ENCODE measurements at regions of chr5 and their contacts with region 1.

Region 1: GRCh38 chr5:163408311-163408923 is 29.0 kb upstream of the CCNG1 start:
- DNase-seq: peak; percentile 63
- H3K4me3 ChIP-seq: no peak overlapping the region
- H3K27ac ChIP-seq: no peak overlapping the region
- H3K4me1 ChIP-seq: no peaks in the 10 kb centered on the region
- H3K27me3 ChIP-seq: no peaks in the 10 kb centered on the region
- CTCF ChIP-seq: peak; percentile 76 to 83
- POLR2A ChIP-seq: no peak

Region 2: GRCh38 chr5:161544350-161544765 is 1864.1 kb before region 1 on chr5:
- CTCF ChIA-PET with region 1: interaction called, 49 read pairs
- POLR2A ChIA-PET with region 1: no interaction called
- dilution Hi-C with region 1: no loop called
- intact Hi-C with region 1: loop called (anchors 1 kb)
- DNase-seq: peak; percentile 12
- H3K4me3 ChIP-seq: no peak overlapping the region
- H3K27ac ChIP-seq: no peak overlapping the region
- H3K4me1 ChIP-seq: no peaks in the 10 kb centered on the region
- H3K27me3 ChIP-seq: peaks cover 9 to 28% of the 10 kb centered on the region in 2 experiments
- CTCF ChIP-seq: peak; percentile 66 to 72
- POLR2A ChIP-seq: no peak

Region 3: GRCh38 chr5:162543437-162543836 is 865.0 kb before region 1 on chr5:
- CTCF ChIA-PET with region 1: no interaction called
- POLR2A ChIA-PET with region 1: no interaction called
- dilution Hi-C with region 1: no loop called
- intact Hi-C with region 1: no loop called
- DNase-seq: no peak
- H3K4me3 ChIP-seq: no peak overlapping the region
- H3K27ac ChIP-seq: no peak overlapping the region
- H3K4me1 ChIP-seq: no peaks in the 10 kb centered on the region
- H3K27me3 ChIP-seq: no peaks in the 10 kb centered on the region
- CTCF ChIP-seq: no peak
- POLR2A ChIP-seq: no peak

Region 4: DNA sequence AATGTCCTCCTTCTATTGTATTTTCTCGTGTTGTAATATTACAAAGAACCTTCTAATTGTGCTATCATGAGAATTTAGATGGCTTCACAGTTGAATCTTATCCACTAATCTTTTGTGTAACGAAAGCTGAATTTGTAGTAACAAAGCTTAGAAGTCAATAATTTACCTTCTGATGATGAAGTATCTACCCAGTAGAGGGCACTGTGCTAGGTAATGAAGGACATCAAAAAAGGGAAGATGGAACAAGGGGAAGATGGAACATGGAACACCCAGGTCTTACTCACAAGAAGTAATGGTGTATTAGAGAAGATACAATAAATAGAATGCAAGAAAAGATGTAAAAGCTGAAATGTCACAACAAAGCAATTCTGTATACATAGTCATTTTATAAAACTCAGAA is 102.0 kb before region 1 on chr5:
- CTCF ChIA-PET with region 1: interaction called, 45 read pairs
- POLR2A ChIA-PET with region 1: no interaction called
- dilution Hi-C with region 1: no loop called
- intact Hi-C with region 1: loop called (anchors 1 kb)
- DNase-seq: peak; percentile 1
- H3K4me3 ChIP-seq: no peak overlapping the region
- H3K27ac ChIP-seq: no peak overlapping the region
- H3K4me1 ChIP-seq: no peaks in the 10 kb centered on the region
- H3K27me3 ChIP-seq: no peaks in the 10 kb centered on the region
- CTCF ChIP-seq: peak in 1 of 2 donors; percentile 4
- POLR2A ChIP-seq: no peak

Region 5: DNA sequence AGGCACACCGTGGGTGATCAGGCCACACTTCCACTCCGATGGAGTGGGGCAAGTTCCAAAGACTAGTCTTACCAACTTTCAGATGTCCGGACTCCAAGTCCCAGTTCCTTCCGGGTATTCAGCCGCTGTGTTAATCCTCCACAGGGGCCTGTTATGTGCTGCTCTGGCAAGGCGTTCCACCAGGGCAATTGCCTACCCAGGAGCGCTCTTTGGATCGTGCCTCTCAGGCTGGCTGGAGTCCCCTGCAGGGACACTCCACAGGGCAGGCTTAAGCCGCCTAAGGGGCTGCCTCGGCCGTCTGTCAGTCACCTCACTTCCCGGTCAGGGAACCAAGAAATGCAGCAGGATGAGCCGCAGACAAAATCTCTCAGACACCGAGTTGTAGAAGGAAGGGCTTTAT is 89.7 kb before region 1 on chr5:
- CTCF ChIA-PET with region 1: no interaction called
- POLR2A ChIA-PET with region 1: no interaction called
- dilution Hi-C with region 1: no loop called
- intact Hi-C with region 1: no loop called
- DNase-seq: no peak
- H3K4me3 ChIP-seq: no peak overlapping the region
- H3K27ac ChIP-seq: no peak overlapping the region
- H3K4me1 ChIP-seq: no peaks in the 10 kb centered on the region
- H3K27me3 ChIP-seq: no peaks in the 10 kb centered on the region
- CTCF ChIP-seq: no peak
- POLR2A ChIP-seq: no peak

Region 6: GRCh38 chr5:163347671-163348070 is 60.7 kb before region 1 on chr5:
- CTCF ChIA-PET with region 1: interaction called, 34 read pairs
- POLR2A ChIA-PET with region 1: no interaction called
- dilution Hi-C with region 1: no loop called
- intact Hi-C with region 1: loop called (anchors 5 kb)
- DNase-seq: peak; percentile 57
- H3K4me3 ChIP-seq: no peak overlapping the region
- H3K27ac ChIP-seq: no peak overlapping the region
- H3K4me1 ChIP-seq: no peaks in the 10 kb centered on the region
- H3K27me3 ChIP-seq: no peaks in the 10 kb centered on the region
- CTCF ChIP-seq: peak; percentile 60 to 66
- POLR2A ChIP-seq: no peak

Region 7: DNA sequence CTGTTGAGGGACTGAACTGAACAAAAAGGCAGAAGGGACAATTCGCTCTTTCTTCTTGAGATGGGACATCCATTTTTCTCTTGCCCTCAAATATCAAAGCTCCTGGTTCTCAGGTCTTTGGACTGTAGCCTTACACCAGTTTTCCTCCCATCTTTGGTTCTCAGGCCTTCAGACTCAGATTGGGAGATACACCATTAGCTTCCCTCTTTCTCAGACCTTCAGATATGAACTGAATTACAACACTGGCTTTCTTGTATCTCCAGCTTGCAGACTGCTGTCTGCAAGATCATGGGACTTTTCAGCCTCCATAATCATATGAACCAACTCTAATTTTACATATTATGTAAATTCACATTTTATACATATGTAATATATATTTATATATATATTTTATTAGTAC is 16.4 kb after region 1 on chr5:
- CTCF ChIA-PET with region 1: interaction called, 14 read pairs
- POLR2A ChIA-PET with region 1: no interaction called
- dilution Hi-C with region 1: no loop called
- intact Hi-C with region 1: no loop called
- DNase-seq: no peak
- H3K4me3 ChIP-seq: no peak overlapping the region
- H3K27ac ChIP-seq: no peak overlapping the region
- H3K4me1 ChIP-seq: no peaks in the 10 kb centered on the region
- H3K27me3 ChIP-seq: no peaks in the 10 kb centered on the region
- CTCF ChIP-seq: no peak
- POLR2A ChIP-seq: no peak

Region 8: DNA sequence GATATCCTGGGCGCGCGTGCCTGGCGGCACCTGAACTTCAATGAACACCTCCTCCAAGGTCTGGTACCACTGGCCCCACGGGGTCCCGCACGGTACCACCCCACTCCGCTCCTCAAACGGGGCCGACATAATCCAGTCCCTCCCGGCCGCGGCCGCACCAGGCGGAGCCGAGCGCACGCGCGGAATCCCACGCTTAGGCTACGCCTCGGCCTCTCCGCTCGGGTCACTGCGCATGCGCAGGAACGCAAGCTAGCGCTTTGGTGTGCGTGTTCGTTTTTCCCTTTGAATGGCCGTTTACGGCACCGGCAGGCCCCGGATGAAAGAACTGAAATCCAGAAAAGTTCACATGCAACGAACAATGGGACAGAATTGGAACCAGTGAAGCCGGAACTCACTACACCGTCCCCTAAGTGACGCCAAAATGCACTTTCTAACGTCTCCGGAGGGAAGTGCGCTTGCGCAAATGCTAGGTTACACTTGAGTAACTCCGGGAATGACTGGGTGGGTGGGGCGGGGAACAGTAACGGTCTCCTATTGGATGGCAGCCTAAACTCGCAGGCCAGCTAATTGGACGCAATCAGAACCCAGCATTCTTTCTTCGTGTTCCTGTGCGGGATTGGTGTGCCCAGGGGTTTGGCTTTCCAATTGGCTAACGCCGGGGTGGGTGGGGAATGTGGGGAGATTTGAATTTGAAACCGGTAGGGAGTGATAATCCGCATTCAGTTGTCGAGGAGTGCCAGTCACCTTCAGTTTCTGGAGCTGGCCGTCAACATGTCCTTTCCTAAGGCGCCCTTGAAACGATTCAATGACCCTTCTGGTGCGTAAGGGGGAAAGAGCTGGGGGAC is 51.7 kb after region 1 on chr5 and contains the starts of genes HMMR and NUDCD2:
- CTCF ChIA-PET with region 1: interaction called, 11 read pairs
- POLR2A ChIA-PET with region 1: no interaction called
- dilution Hi-C with region 1: no loop called
- intact Hi-C with region 1: no loop called
- DNase-seq: peak; percentile 99
- H3K4me3 ChIP-seq: peak within 1 kb of the TSS; percentile 85 to 96 (median 92)
- H3K27ac ChIP-seq: peak within 1 kb of the TSS; percentile 99
- H3K4me1 ChIP-seq: peaks cover 21% of the 10 kb centered on the region
- H3K27me3 ChIP-seq: no peaks in the 10 kb centered on the region
- CTCF ChIP-seq: peak in 1 of 2 donors; percentile 11
- POLR2A ChIP-seq: peak; percentile 95
- total RNA-seq, gene HMMR: 26.0 and 31.0 TPM in 2 replicates
- total RNA-seq, gene NUDCD2: 46.9 and 50.3 TPM in 2 replicates

Measured in endothelial cell of umbilical vein (primary cell).